AG04449 (cell line): ENCODE measurements at regions of chr15 and their contacts with region 1.

Region 1: GRCh38 chr15:58070801-58071418 is 5.4 kb upstream of the ALDH1A2 start:
- DNase-seq: no peak
- H3K4me3 ChIP-seq: no peak overlapping the region
- CTCF ChIP-seq: peak; percentile 81

Region 2: DNA sequence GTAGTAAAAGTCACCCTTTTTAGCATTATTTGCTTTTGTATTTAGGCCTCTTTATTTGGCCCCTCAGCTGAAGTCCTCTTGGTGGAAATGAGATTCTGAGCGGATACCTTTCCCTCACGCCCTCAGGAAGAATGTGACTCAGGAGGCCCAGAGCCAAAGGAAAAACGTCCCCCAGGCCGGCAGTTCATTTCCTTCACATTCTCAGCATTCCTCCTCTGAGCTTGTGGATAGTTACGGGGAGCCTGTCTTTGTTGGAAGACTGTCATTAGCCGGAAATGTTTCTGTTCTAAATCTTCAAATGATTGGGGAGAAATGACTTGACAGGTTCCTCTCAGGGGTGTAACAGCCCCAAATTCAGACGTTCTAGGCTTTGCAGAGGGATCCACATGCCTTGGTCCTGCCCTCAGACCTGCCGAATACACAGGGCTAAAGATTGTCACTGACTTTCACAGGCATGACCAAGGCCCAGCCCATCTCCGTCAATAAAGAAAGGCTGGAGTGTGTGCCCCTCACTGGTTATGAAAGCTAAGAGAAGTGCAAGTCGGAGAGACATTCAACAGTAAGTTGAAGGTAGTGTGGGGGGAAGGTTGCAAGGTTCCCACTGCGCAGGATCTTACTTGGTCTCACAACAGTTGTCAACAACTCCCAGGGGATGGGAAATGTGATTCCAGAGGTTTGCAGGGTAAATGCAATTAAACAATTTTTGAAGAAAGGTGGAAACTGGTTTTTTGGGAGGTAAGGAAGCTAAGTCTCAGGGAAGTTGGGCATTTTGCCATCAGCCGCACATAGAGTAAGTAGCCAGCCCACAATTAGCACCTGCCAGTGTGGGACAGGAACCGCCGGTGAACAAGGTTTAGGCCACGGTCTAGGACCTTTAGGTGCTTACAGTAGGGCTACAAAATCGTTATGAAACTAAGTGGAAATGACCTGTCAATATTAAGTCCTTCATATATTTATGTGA is 518.9 kb before region 1 on chr15:
- CTCF ChIA-PET with region 1: interaction called, 14 read pairs
- POLR2A ChIA-PET with region 1: no interaction called
- DNase-seq: peak; percentile 26
- H3K4me3 ChIP-seq: no peak overlapping the region
- CTCF ChIP-seq: no peak

Region 3: DNA sequence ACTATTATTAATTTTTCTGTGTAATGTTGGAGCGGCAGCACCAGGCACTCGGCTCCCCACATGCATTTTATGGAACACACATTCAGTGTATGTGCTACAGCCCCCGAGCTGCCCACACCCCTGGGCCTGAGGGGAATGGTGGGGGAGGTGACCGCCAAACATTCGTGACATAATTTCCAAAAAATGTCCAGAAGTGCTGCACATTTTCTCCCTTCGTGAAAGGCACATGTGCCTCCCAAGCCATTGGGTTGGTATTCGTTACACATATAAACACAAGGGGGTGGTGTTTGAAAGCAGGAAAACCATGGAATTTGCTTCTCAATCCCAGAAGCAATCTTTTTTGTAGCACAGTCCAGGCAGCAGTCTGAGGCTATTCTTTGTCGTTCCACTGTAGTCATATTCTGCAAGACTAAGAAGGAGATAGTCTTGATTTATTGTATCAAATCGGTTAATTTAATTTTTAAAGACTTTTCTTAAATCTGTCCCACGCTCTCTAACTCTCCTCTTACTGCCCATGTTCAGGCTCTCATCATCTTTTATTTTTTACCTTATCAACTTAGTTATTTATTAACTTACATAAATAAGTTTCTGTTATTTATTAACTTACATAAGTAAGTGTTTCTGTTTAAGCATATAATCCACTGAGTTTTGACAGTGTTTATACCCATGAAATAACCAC is 403.6 kb before region 1 on chr15:
- CTCF ChIA-PET with region 1: interaction called, 15 read pairs
- POLR2A ChIA-PET with region 1: no interaction called
- DNase-seq: peak; percentile 21
- H3K4me3 ChIP-seq: no peak overlapping the region
- CTCF ChIP-seq: peak; percentile 51

Region 4: DNA sequence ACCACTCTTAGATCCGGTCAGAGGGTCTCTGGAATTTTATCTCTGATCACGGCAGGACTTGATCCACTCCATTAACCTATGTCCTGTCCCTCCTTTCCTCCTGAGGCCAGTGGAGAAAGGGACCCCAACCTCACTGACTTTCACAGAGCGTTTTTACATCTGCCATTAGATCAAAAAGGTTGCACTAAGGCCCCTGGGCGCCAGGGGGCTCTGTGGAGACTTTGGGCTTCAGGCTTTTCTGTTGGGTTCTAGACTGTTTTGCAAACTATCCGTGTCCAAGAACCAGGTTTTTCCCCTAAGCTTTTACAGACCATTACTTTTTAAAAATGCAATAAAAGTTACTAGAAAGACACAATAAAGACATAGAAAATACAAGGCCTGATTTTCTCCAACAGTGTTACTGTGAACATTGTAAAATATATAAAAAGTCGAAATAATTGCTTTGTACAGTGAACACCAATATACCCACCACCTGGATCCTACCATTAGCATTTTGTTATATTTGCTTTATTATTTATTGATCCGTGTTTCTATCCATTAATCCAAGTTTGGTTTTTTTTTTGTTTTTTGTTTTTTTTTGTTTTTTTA is 204.7 kb before region 1 on chr15:
- CTCF ChIA-PET with region 1: interaction called, 190 read pairs
- POLR2A ChIA-PET with region 1: no interaction called
- DNase-seq: no peak
- H3K4me3 ChIP-seq: no peak overlapping the region
- CTCF ChIP-seq: peak; percentile 69

Region 5: GRCh38 chr15:58057559-58057958 is 13.4 kb before region 1 on chr15:
- CTCF ChIA-PET with region 1: interaction called, 36 read pairs
- POLR2A ChIA-PET with region 1: no interaction called
- DNase-seq: no peak
- H3K4me3 ChIP-seq: no peak overlapping the region
- CTCF ChIP-seq: no peak

Region 6: DNA sequence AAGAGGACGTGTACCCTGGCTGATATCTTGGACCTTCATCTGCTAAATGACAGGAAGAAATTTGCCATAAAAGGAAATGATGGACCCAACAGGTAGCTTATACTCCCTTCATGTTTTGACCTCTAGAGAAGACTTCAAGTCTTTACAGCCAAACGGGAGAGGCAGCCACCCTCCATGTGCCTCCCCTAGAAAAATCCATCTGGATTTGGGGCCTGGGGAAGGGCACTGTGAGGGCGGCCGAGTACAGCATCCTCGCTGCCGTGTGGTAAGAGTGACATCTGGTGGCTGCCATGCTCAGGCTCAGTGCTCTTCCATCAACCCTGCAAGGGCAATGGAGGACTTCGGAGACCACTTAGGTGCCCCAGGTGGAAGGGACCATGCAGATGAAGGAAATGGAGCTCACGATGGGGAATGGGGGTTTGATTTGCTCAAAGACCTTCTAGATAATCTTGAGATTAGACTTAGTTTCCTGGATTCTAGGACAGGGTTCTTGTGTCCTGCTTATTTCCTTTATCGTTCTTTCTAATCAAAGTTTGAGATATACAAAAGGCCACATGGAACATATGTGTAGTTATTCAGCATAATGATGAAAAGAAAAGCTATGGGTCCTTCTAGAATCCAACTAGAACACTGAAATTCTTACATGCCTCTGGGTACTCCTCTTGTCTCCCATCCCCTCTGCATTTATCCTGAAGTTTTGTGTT is 111.7 kb after region 1 on chr15:
- CTCF ChIA-PET with region 1: interaction called, 36 read pairs
- POLR2A ChIA-PET with region 1: no interaction called
- DNase-seq: no peak
- H3K4me3 ChIP-seq: no peak overlapping the region
- CTCF ChIP-seq: peak; percentile 87